Activated CD4-positive, alpha-beta T cell treated with anti-CD3 and anti-CD28 coated beads for 36 hours (primary cell): ENCODE measurements at regions of chr21 and their contacts with region 1.

Region 1: DNA sequence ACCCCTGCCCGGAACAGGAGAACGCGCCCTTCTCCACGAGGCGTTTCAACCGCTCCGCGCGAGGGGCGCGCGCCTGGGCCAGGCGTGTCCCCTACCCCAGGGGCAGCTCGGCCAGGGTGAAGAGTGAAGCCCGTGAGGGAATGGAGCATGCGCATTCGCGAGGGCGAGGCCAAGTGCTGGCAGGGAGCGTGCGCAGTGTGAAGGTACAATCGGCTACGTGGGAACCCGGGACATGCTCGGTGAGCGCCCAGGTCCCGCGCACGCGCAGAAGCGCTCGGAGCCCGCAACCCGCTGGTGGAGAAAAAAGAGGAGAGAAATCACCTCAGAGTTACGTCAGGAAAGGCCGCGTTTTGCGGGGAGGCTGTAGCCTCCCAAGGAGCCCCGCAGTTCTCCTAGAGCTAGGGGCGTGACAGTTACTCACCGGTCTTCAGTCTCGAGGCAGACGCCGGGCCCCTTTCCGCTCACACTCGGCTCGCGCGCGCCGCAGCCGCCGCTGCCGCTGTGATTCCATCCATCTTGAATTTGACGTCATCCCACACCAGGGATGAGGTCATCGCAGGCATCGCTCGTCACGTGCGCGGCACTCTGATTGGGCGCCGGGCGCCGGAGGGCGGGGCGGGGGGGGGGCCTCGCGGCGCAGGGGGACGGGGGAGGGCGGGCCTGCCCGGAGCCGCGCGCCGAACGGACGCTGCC is at the start of gene ZBTB21:
- DNase-seq: peak; percentile 99
- ATAC-seq: peak; percentile 90
- H3K4me3 Mint-ChIP-seq: peak within 1 kb of the TSS; percentile 93
- H3K27ac Mint-ChIP-seq: peak within 1 kb of the TSS; percentile 99
- H3K4me1 Mint-ChIP-seq: peaks cover 27% of the 10 kb centered on the region
- H3K27me3 Mint-ChIP-seq: no peaks in the 10 kb centered on the region
- total RNA-seq, gene ZBTB21: 30.7 to 32.9 TPM

Region 2: GRCh38 chr21:41361786-41362604 is 648.0 kb before region 1 on chr21 and contains the start of gene MX2:
- CTCF ChIA-PET with region 1: no interaction called
- POLR2A ChIA-PET with region 1: no interaction called
- intact Hi-C with region 1: loop called in 1 of 2 experiments (anchors 1 kb)
- DNase-seq: peak; percentile 87
- ATAC-seq: peak; percentile 79
- H3K4me3 Mint-ChIP-seq: peak within 1 kb of the TSS; percentile 77
- H3K27ac Mint-ChIP-seq: peak within 1 kb of the TSS; percentile 97
- H3K4me1 Mint-ChIP-seq: peaks cover 56% of the 10 kb centered on the region
- H3K27me3 Mint-ChIP-seq: no peaks in the 10 kb centered on the region
- total RNA-seq, gene MX2: 30.7 to 40.4 TPM

Region 3: GRCh38 chr21:41879190-41879998 is 130.6 kb before region 1 on chr21 and contains the start of gene PRDM15:
- CTCF ChIA-PET with region 1: interaction called, 3 read pairs
- POLR2A ChIA-PET with region 1: interaction called, 3 read pairs
- intact Hi-C with region 1: loop called (anchors 1 to 5 kb)
- DNase-seq: peak; percentile 92
- ATAC-seq: peak; percentile 79
- H3K4me3 Mint-ChIP-seq: peak within 1 kb of the TSS; percentile 79
- H3K27ac Mint-ChIP-seq: peak within 1 kb of the TSS; percentile 97
- H3K4me1 Mint-ChIP-seq: peaks cover 18% of the 10 kb centered on the region
- H3K27me3 Mint-ChIP-seq: no peaks in the 10 kb centered on the region
- total RNA-seq, gene PRDM15: 11.8 to 13.0 TPM

Region 4: GRCh38 chr21:41926117-41926806 is 83.7 kb before region 1 on chr21:
- CTCF ChIA-PET with region 1: interaction called, 8 read pairs
- POLR2A ChIA-PET with region 1: no interaction called
- intact Hi-C with region 1: loop called in 1 of 2 experiments (anchors 1 kb)
- DNase-seq: peak; percentile 35
- ATAC-seq: peak; percentile 82
- H3K4me3 Mint-ChIP-seq: peak overlapping the region; percentile 86
- H3K27ac Mint-ChIP-seq: peak overlapping the region; percentile 99
- H3K4me1 Mint-ChIP-seq: peaks cover 59% of the 10 kb centered on the region
- H3K27me3 Mint-ChIP-seq: no peaks in the 10 kb centered on the region

Region 5: DNA sequence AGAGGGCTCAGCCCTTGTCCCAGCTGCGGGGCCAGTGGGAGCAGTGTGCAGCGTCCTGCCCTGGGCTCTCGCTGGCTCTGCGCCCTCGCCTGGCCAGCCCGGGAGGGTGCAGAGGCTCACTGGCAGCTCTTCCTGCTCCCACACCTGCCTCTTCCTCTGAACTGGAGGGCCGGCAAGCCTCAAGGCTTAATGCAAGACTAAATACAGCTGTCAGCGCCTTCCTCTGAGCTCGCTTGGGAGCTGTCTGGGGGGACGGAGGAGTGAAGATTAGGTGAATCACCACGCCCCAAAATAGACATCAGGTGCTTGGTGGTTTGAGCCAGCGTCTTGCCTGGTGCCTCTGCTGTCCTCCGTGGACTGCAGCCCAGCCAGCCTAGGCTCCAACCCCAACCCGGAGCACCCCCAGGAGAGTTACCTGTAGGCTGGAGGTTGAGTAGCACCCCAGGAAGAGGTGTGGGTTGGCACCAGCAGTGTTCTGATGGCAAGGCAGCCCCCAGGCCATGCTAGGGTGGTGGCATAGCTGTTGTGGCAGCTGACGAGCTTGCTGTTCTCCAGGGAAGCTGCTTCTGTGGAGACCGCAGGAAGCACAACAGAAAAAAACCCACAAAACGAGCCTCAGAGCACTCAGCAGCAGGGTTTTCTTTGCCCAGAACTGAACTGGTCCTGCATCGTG is 98.0 kb after region 1 on chr21:
- CTCF ChIA-PET with region 1: interaction called, 6 read pairs
- POLR2A ChIA-PET with region 1: interaction called, 4 read pairs
- intact Hi-C with region 1: loop called in 1 of 2 experiments (anchors 2 kb)
- DNase-seq: peak; percentile 83
- ATAC-seq: peak; percentile 99
- H3K4me3 Mint-ChIP-seq: peak overlapping the region; percentile 4
- H3K27ac Mint-ChIP-seq: no peak overlapping the region
- H3K4me1 Mint-ChIP-seq: peaks cover 11% of the 10 kb centered on the region
- H3K27me3 Mint-ChIP-seq: no peaks in the 10 kb centered on the region

Region 6: DNA sequence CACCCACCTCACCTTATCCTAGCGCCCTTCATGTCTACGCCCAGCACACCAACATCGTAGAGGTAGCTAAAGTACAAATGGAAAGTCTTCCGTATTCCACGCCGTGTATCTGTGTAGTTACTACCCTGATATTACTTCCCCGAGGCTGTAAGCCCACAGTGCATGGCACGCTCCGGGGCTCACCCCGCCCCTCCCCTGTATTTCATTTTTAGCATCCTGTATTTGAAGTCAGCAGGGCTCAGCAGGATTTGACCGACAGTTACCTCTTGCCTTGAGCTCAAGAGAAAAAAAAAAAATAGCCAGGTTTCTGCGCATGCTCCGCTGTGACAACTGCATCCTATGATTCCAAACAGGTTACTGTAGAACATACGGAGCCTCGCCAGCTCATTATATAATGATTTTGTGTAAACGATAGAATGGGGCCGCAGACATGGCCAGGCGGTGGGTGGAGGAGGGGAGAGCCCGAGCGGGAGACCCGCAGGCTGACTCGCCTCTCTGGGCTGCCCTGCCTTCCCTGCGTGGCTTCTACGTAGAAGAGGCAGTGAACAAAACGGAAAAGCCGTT is 210.2 kb after region 1 on chr21:
- CTCF ChIA-PET with region 1: no interaction called
- POLR2A ChIA-PET with region 1: no interaction called
- intact Hi-C with region 1: no loop called
- DNase-seq: peak; percentile 82
- ATAC-seq: peak; percentile 89
- H3K4me3 Mint-ChIP-seq: peak overlapping the region; percentile 90
- H3K27ac Mint-ChIP-seq: peak overlapping the region; percentile 96
- H3K4me1 Mint-ChIP-seq: peaks cover 24% of the 10 kb centered on the region
- H3K27me3 Mint-ChIP-seq: no peaks in the 10 kb centered on the region

Region 7: DNA sequence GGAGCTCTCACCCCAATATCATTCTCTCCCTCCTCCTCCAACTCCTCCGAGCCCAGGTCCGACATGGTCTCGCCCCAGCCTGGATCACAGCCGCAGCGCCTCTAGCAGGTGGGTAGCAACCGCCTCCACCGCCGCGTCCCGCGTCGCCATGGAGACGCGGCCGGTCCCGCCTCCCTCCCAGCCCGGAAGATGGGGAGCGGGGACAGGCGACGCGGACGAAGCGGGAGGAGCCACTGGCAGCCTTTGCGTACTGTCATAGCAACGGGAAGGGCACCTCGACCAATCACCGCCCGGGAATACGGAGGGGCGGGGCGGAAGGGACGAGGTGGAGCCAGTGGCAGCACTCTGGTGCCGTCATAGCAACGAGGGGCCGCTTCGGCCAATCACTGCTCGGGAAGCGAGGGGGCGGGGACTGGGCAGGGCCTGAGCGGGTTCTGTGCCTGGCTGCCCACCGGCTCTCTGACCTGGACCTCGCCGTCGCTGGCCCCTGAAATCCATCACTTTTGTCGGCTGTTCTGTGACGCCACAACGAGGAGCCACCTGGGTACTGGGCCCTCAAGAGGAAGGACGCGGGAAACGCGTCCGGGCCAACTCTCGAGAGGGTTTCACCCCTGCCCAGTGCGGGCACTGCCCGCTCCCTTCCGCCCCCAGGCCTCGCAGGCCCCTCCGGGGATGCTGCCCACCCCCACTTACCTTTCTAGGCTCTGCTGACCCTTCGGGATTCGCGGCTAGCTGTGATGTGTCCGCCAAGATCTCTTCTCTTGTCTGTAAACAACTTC is 486.3 kb after region 1 on chr21 and contains the start of gene RSPH1:
- CTCF ChIA-PET with region 1: no interaction called
- POLR2A ChIA-PET with region 1: no interaction called
- intact Hi-C with region 1: loop called in 1 of 2 experiments (anchors 1 kb)
- DNase-seq: peak; percentile 100
- ATAC-seq: peak; percentile 99
- H3K4me3 Mint-ChIP-seq: peak within 1 kb of the TSS; percentile 75
- H3K27ac Mint-ChIP-seq: peak within 1 kb of the TSS; percentile 69
- H3K4me1 Mint-ChIP-seq: peaks cover 25% of the 10 kb centered on the region
- H3K27me3 Mint-ChIP-seq: peaks cover 2% of the 10 kb centered on the region
- total RNA-seq, gene RSPH1: 0.21 to 0.34 TPM